B cell (primary cell): ENCODE measurements at regions of chr10 and their contacts with region 1.

Region 1: DNA sequence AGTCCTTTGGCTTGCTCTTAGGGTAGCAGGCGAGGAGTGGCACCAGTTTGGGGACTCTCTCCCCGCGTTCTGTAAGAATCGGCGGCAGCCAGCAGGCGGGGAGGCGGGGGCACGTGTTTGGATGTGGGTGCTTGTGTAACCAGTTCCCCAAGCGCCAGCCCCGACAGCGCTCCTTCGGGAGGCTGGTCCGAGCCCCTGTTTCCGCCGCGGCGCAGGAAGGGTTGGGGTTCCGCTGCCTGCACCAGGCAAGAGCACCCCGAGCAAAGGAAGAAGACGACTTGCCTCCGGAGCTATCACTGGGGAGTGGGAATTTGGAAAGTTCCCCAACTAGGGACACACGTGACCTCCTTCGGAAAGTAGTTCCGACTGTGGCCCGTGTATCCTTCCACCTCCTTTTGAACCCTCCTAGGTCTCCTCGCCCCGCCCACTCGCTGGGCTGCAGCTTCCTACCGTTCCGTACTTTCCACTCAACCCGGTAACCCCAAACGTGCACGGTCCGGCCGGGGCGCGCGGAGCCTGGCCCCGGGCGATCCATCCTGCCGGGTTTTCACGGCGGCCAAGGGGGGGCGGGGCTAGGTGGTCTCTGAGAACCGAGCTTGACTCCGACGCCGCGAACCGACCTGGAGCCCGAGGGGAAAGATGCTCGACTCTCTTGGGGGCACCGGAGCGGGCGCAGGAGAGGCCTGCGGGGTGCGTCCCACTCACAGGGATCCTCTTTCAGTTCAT is 1.2 kb downstream of the KLLN start:
- DNase-seq: peak; percentile 98
- ATAC-seq: peak; percentile 66
- H3K4me3 ChIP-seq: peak overlapping the region; percentile 87 to 99 (median 99)
- H3K4me3 Mint-ChIP-seq: peak overlapping the region; percentile 98
- H3K27ac ChIP-seq: peak overlapping the region; percentile 79 to 84
- H3K27ac Mint-ChIP-seq: peak overlapping the region; percentile 98
- H3K4me1 ChIP-seq: peaks cover 16 to 20% of the 10 kb centered on the region in 2 donors
- H3K4me1 Mint-ChIP-seq: peaks cover 35% of the 10 kb centered on the region
- H3K27me3 ChIP-seq: no peaks in the 10 kb centered on the region
- H3K27me3 Mint-ChIP-seq: no peaks in the 10 kb centered on the region
- CTCF ChIP-seq: no peak

Region 2: GRCh38 chr10:87782721-87783120 is 79.4 kb before region 1 on chr10:
- CTCF ChIA-PET with region 1: no interaction called
- POLR2A ChIA-PET with region 1: no interaction called
- intact Hi-C with region 1: no loop called
- DNase-seq: no peak
- ATAC-seq: no peak
- H3K4me3 ChIP-seq: no peak overlapping the region
- H3K4me3 Mint-ChIP-seq: no peak overlapping the region
- H3K27ac ChIP-seq: no peak overlapping the region
- H3K27ac Mint-ChIP-seq: no peak overlapping the region
- H3K4me1 ChIP-seq: no peaks in the 10 kb centered on the region
- H3K4me1 Mint-ChIP-seq: no peaks in the 10 kb centered on the region
- H3K27me3 ChIP-seq: no peaks in the 10 kb centered on the region
- H3K27me3 Mint-ChIP-seq: no peaks in the 10 kb centered on the region
- CTCF ChIP-seq: no peak

Region 3: GRCh38 chr10:87798082-87798481 is 64.0 kb before region 1 on chr10:
- CTCF ChIA-PET with region 1: no interaction called
- POLR2A ChIA-PET with region 1: no interaction called
- intact Hi-C with region 1: no loop called
- DNase-seq: no peak
- ATAC-seq: no peak
- H3K4me3 ChIP-seq: no peak overlapping the region
- H3K4me3 Mint-ChIP-seq: peak overlapping the region; percentile 40
- H3K27ac ChIP-seq: peak overlapping the region in 1 of 2 donors; percentile 2
- H3K27ac Mint-ChIP-seq: peak overlapping the region; percentile 39
- H3K4me1 ChIP-seq: peaks cover 11 to 13% of the 10 kb centered on the region in 2 donors
- H3K4me1 Mint-ChIP-seq: peaks cover 39% of the 10 kb centered on the region
- H3K27me3 ChIP-seq: no peaks in the 10 kb centered on the region
- H3K27me3 Mint-ChIP-seq: no peaks in the 10 kb centered on the region
- CTCF ChIP-seq: no peak

Region 4: DNA sequence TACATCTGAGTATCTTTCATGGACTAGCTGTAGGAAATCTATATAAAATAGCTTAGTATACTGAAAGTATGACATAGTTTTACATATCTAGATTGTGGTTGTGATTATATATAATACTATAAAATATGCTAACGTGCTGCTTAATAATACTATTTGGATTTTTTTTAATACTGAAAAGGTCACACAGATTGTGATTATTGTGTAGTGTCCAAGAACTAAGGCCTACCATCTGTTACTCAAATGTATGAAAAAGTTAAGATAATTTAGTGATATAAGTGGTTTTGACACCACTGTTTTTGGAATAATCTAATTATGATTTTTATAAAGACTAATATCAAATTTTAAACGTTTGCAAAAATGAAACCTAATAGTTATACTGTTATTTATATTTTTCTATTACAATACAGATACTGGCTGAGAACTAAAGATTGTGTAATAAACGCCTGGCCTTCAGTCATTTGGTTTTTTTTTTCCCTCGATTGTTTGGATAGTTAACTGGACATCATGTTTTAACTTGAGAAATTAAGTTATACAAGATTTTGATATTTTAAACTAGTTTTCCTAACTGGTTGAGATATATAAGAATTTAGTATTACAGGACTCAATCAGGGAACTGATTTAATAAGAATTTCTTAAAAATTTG is 13.9 kb after region 1 on chr10:
- CTCF ChIA-PET with region 1: interaction called, 16 read pairs
- POLR2A ChIA-PET with region 1: no interaction called
- intact Hi-C with region 1: no loop called
- DNase-seq: no peak
- ATAC-seq: no peak
- H3K4me3 ChIP-seq: no peak overlapping the region
- H3K4me3 Mint-ChIP-seq: no peak overlapping the region
- H3K27ac ChIP-seq: no peak overlapping the region
- H3K27ac Mint-ChIP-seq: no peak overlapping the region
- H3K4me1 ChIP-seq: peaks cover 17 to 26% of the 10 kb centered on the region in 2 donors
- H3K4me1 Mint-ChIP-seq: peaks cover 48% of the 10 kb centered on the region
- H3K27me3 ChIP-seq: no peaks in the 10 kb centered on the region
- H3K27me3 Mint-ChIP-seq: no peaks in the 10 kb centered on the region
- CTCF ChIP-seq: no peak

Region 5: GRCh38 chr10:88114368-88114767 is 252.3 kb after region 1 on chr10:
- CTCF ChIA-PET with region 1: interaction called, 180 read pairs
- POLR2A ChIA-PET with region 1: interaction called, 20 read pairs
- intact Hi-C with region 1: loop called (anchors 1 kb)
- DNase-seq: peak; percentile 68
- ATAC-seq: peak; percentile 41
- H3K4me3 ChIP-seq: no peak overlapping the region
- H3K4me3 Mint-ChIP-seq: peak overlapping the region; percentile 66
- H3K27ac ChIP-seq: peak overlapping the region; percentile 48 to 58
- H3K27ac Mint-ChIP-seq: peak overlapping the region; percentile 86
- H3K4me1 ChIP-seq: peaks cover 91 to 94% of the 10 kb centered on the region in 2 donors
- H3K4me1 Mint-ChIP-seq: peaks cover 57% of the 10 kb centered on the region
- H3K27me3 ChIP-seq: no peaks in the 10 kb centered on the region
- H3K27me3 Mint-ChIP-seq: no peaks in the 10 kb centered on the region
- CTCF ChIP-seq: peak; percentile 48

Region 6: GRCh38 chr10:88330174-88330573 is 468.1 kb after region 1 on chr10:
- CTCF ChIA-PET with region 1: no interaction called
- POLR2A ChIA-PET with region 1: no interaction called
- intact Hi-C with region 1: loop called (anchors 5 kb)
- DNase-seq: peak; percentile 23
- ATAC-seq: no peak
- H3K4me3 ChIP-seq: no peak overlapping the region
- H3K4me3 Mint-ChIP-seq: no peak overlapping the region
- H3K27ac ChIP-seq: no peak overlapping the region
- H3K27ac Mint-ChIP-seq: no peak overlapping the region
- H3K4me1 ChIP-seq: peaks cover 29 to 35% of the 10 kb centered on the region in 2 donors
- H3K4me1 Mint-ChIP-seq: peaks cover 39% of the 10 kb centered on the region
- H3K27me3 ChIP-seq: no peaks in the 10 kb centered on the region
- H3K27me3 Mint-ChIP-seq: no peaks in the 10 kb centered on the region
- CTCF ChIP-seq: no peak

Region 7: DNA sequence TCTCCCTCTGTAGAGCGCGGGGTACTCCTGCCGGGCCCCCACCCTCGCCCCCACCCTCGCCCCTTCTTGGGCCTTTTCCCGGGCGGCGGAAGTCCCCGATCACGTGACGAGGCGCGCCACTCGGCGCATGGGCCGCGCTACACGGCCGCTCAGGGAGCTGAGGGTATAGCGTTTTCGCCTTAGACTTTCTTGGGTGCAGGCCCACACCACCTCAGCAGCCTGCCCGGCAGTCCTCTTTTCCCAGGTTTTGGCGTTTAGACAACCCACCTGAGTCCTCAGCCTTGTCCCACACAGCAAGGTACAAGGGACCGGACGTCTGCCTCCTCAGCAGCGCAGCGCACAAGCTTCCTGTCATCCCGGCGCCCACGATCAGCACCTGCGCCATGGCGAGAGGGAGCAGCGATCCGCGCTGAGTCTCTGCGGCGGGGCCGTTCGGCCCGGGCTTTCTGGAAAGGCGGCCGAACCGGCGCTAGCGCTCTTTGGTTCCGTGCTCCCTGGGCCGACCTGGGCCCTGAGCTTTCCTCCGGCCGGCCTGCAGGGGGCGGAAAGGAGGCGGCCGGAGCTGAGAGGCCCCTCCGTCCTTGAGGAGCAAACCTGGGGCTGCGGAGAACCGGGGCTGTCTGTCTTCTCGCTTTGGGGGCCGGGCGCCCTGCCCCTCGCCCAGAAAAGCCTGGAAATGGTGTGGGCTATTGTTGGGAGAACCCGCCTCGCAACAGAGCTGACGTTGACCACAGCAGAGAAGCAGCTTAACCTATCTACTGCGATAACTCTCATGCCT is 720.9 kb after region 1 on chr10 and contains the start of gene RNLS:
- CTCF ChIA-PET with region 1: interaction called, 15 read pairs
- POLR2A ChIA-PET with region 1: interaction called, 21 read pairs
- intact Hi-C with region 1: loop called (anchors 1 kb)
- DNase-seq: peak; percentile 84
- ATAC-seq: peak; percentile 83
- H3K4me3 ChIP-seq: peak within 1 kb of the TSS; percentile 64 to 94 (median 89)
- H3K4me3 Mint-ChIP-seq: peak within 1 kb of the TSS; percentile 95
- H3K27ac ChIP-seq: peak within 1 kb of the TSS; percentile 89 to 94
- H3K27ac Mint-ChIP-seq: peak within 1 kb of the TSS; percentile 96
- H3K4me1 ChIP-seq: peaks cover 7 to 8% of the 10 kb centered on the region in 2 donors
- H3K4me1 Mint-ChIP-seq: peaks cover 13% of the 10 kb centered on the region
- H3K27me3 ChIP-seq: no peaks in the 10 kb centered on the region
- H3K27me3 Mint-ChIP-seq: no peaks in the 10 kb centered on the region
- CTCF ChIP-seq: peak; percentile 86
- total RNA-seq, gene RNLS: 7.5 and 7.9 TPM in 2 replicates